ENCODE measurements at regions of chr20 and their contacts with region 1.

Region 1: GRCh38 chr20:9392892-9393857 is 121.2 kb upstream of the LAMP5 start:
- DNase-seq: peak; percentile 62 to 73
- ATAC-seq: peak; percentile 96 to 98
- H3K4me3 ChIP-seq: no peak overlapping the region
- H3K27ac ChIP-seq: 0 out of 6 replicates have a peak overlapping the region, but pooled peaks of 1 of the 2 experiments have one; percentile 26
- H3K4me1 ChIP-seq: 0 out of 3 replicates have a peak, but pooled peaks cover 4% of the 10 kb centered on the region
- CTCF ChIP-seq: peak; percentile 86
- EP300 ChIP-seq: no peak
- POLR2A ChIP-seq: no peak
- RAD21 ChIP-seq: peak; percentile 85 to 91

Region 2: DNA sequence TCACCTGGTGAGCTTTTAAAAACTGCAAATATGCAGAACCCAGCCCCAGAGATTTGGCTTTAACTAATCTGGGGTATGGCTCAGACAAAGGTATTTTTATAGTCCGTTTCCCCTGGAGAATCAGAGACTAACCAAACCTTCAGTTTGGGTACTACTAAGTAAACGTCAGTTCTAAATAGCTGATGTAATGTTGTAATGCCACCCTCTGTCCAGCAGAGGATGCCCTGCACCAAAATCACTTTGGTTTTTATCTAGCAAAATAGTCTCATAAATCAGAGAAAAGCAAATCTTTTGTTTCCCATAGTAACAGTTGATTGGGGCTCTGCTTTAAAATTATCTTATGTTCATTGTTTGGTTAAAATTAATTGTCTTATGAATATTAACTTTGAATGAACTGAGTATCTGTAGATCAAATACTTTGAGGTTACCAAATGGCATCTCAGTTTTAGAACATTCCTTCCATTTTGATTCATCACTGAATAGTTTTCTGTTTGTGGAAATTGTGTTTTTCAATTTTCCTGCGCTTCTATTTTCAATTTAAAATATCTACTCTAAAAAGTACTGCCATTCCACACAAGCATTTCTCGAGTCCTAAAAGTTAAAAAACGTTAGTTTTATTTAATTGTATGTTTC is 602.6 kb before region 1 on chr20:
- CTCF ChIA-PET with region 1: interaction called, 29 read pairs
- POLR2A ChIA-PET with region 1: no interaction called
- DNase-seq: peak; percentile 15 to 63
- ATAC-seq: peak; percentile 69 to 75; a peak in 5 of 6 replicates
- H3K4me3 ChIP-seq: no peak overlapping the region
- H3K27ac ChIP-seq: peak overlapping the region in 1 of 2 experiments; percentile 44; a peak in 1 of 6 replicates
- H3K4me1 ChIP-seq: no peaks in the 10 kb centered on the region
- CTCF ChIP-seq: peak; percentile 99
- EP300 ChIP-seq: no peak
- POLR2A ChIP-seq: no peak
- RAD21 ChIP-seq: peak; percentile 95 to 98

Region 3: GRCh38 chr20:9367746-9368145 is 25.4 kb before region 1 on chr20:
- CTCF ChIA-PET with region 1: interaction called, 13 read pairs
- POLR2A ChIA-PET with region 1: no interaction called
- DNase-seq: no peak
- ATAC-seq: no peak
- H3K4me3 ChIP-seq: no peak overlapping the region
- H3K27ac ChIP-seq: no peak overlapping the region
- H3K4me1 ChIP-seq: no peaks in the 10 kb centered on the region
- CTCF ChIP-seq: no peak
- EP300 ChIP-seq: no peak
- POLR2A ChIP-seq: no peak
- RAD21 ChIP-seq: no peak

Region 4: DNA sequence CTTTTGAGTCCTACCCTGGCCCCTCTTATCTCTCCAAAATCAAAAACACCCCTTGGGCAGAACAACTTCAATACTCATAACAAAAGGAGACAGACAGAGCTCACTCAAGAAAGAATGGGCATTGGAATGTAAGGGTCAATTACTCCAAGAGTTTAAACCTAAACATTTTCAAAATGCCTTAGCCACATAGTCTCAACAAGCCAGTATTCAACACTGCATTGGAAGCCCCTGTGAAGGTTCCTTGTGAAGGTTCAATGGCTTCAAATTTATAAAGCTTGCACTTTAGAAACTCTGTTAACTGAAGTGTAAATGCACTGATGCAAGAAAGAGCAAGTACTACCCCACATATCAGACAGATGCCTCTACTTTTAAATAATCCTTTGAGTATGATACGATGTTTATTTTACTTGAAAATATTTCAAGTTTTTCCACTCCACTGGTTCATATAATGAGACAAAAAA is 17.9 kb before region 1 on chr20:
- CTCF ChIA-PET with region 1: interaction called, 13 read pairs
- POLR2A ChIA-PET with region 1: no interaction called
- DNase-seq: no peak
- ATAC-seq: no peak
- H3K4me3 ChIP-seq: no peak overlapping the region
- H3K27ac ChIP-seq: no peak overlapping the region
- H3K4me1 ChIP-seq: peaks cover 10% of the 10 kb centered on the region; the same call in 2 of the 3 replicates
- CTCF ChIP-seq: no peak
- EP300 ChIP-seq: no peak
- POLR2A ChIP-seq: no peak
- RAD21 ChIP-seq: no peak

Measured in A549 (cell line).